ENCODE measurements at regions of chr2 and their contacts with region 1.

Region 1: GRCh38 chr2:127526149-127527000 is at the start of gene IWS1:
- DNase-seq: peak; percentile 92
- H3K4me3 Mint-ChIP-seq: peak within 1 kb of the TSS; percentile 92
- H3K27ac Mint-ChIP-seq: peak within 1 kb of the TSS; percentile 94
- H3K4me1 Mint-ChIP-seq: peaks cover 29% of the 10 kb centered on the region
- H3K27me3 Mint-ChIP-seq: peaks cover 10% of the 10 kb centered on the region
- total RNA-seq, gene IWS1: 52.3 and 57.6 TPM in 2 replicates

Region 2: GRCh38 chr2:127293748-127294562 is 232.4 kb before region 1 on chr2 and contains the start of gene ERCC3:
- intact Hi-C with region 1: loop called (anchors 1 kb)
- DNase-seq: peak; percentile 76
- H3K4me3 Mint-ChIP-seq: peak within 1 kb of the TSS; percentile 99
- H3K27ac Mint-ChIP-seq: peak within 1 kb of the TSS; percentile 98
- H3K4me1 Mint-ChIP-seq: peaks cover 23% of the 10 kb centered on the region
- H3K27me3 Mint-ChIP-seq: no peaks in the 10 kb centered on the region
- total RNA-seq, gene ERCC3: 63.1 and 65.5 TPM in 2 replicates

Region 3: DNA sequence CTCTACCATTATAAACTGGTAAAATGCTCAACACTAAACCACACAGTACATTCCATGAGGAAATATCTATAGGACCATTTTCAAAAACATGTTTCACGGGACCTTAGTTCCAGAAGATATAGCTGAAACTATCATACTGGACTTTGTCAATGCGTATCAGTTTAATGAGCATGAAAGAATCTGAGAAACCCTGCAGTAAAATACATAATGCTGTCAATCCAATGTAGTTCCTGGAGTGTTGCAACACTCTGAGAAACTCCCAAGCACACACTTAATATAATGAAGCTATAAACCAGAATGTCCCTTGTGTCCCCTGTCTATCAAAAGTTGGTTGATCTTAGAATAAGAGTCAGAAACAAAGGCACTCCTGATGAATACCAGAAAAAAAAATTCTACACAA is 16.3 kb before region 1 on chr2:
- intact Hi-C with region 1: loop called (anchors 1 kb)
- DNase-seq: no peak
- H3K4me3 Mint-ChIP-seq: no peak overlapping the region
- H3K27ac Mint-ChIP-seq: no peak overlapping the region
- H3K4me1 Mint-ChIP-seq: peaks cover 68% of the 10 kb centered on the region
- H3K27me3 Mint-ChIP-seq: no peaks in the 10 kb centered on the region

Region 4: GRCh38 chr2:127649684-127650040 is 123.3 kb after region 1 on chr2:
- intact Hi-C with region 1: loop called (anchors 1 kb)
- DNase-seq: peak; percentile 68
- H3K4me3 Mint-ChIP-seq: no peak overlapping the region
- H3K27ac Mint-ChIP-seq: no peak overlapping the region
- H3K4me1 Mint-ChIP-seq: peaks cover 5% of the 10 kb centered on the region
- H3K27me3 Mint-ChIP-seq: peaks cover 2% of the 10 kb centered on the region

Region 5: DNA sequence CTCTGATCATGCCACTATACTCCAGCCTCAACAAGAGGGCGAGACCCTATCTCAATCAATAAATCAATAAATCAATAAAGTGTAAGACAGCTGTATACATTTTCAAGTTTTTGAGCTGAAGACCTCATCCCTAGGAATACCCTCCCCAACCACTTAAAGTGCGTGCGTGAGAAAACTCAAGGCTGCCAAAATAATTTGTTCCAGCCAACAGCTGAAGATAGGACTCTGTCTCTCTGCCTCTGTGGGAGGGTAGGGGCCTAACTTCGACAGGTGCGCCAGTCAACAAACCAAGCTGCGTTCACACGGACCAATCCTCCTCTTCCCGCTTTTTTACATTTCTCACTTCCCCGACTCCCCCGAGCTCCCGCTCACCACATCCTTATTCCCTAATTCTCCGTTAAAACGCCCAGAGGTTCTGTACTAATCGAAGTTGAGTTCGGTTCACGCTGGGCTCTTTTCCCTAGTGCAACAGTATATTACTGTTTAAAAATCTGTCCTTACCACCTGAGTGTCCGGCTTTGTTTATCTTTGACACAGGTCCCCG is 331.0 kb after region 1 on chr2:
- intact Hi-C with region 1: loop called (anchors 1 kb)
- DNase-seq: no peak
- H3K4me3 Mint-ChIP-seq: peak overlapping the region; percentile 92
- H3K27ac Mint-ChIP-seq: peak overlapping the region; percentile 78
- H3K4me1 Mint-ChIP-seq: peaks cover 32% of the 10 kb centered on the region
- H3K27me3 Mint-ChIP-seq: no peaks in the 10 kb centered on the region

Region 6: GRCh38 chr2:128321784-128322714 is 795.7 kb after region 1 on chr2:
- intact Hi-C with region 1: loop called (anchors 10 kb)
- DNase-seq: peak; percentile 79
- H3K4me3 Mint-ChIP-seq: peak overlapping the region; percentile 76
- H3K27ac Mint-ChIP-seq: peak overlapping the region; percentile 23
- H3K4me1 Mint-ChIP-seq: peaks cover 6% of the 10 kb centered on the region
- H3K27me3 Mint-ChIP-seq: peaks cover 6% of the 10 kb centered on the region

Region 7: GRCh38 chr2:128644718-128645256 is 1118.4 kb after region 1 on chr2:
- intact Hi-C with region 1: no loop called
- DNase-seq: no peak
- H3K4me3 Mint-ChIP-seq: no peak overlapping the region
- H3K27ac Mint-ChIP-seq: peak overlapping the region; percentile 52
- H3K4me1 Mint-ChIP-seq: no peaks in the 10 kb centered on the region
- H3K27me3 Mint-ChIP-seq: peaks cover 45% of the 10 kb centered on the region